AG04450 (cell line): ENCODE measurements at regions of chr17 and their contacts with region 1.

Region 1: GRCh38 chr17:63406689-63407330 is 39.3 kb downstream of the CYB561 start:
- DNase-seq: peak; percentile 84
- H3K4me3 ChIP-seq: no peak overlapping the region
- H3K27ac ChIP-seq: no peak overlapping the region
- H3K27me3 ChIP-seq: no peaks in the 10 kb centered on the region
- CTCF ChIP-seq: peak; percentile 91

Region 2: GRCh38 chr17:62975206-62975605 is 431.6 kb before region 1 on chr17:
- CTCF ChIA-PET with region 1: interaction called, 11 read pairs
- POLR2A ChIA-PET with region 1: no interaction called
- DNase-seq: no peak
- H3K4me3 ChIP-seq: no peak overlapping the region
- H3K27ac ChIP-seq: no peak overlapping the region
- H3K27me3 ChIP-seq: no peaks in the 10 kb centered on the region
- CTCF ChIP-seq: no peak

Region 3: GRCh38 chr17:62995377-62995885 is 411.4 kb before region 1 on chr17:
- CTCF ChIA-PET with region 1: interaction called, 13 read pairs
- POLR2A ChIA-PET with region 1: no interaction called
- DNase-seq: no peak
- H3K4me3 ChIP-seq: no peak overlapping the region
- H3K27ac ChIP-seq: no peak overlapping the region
- H3K27me3 ChIP-seq: no peaks in the 10 kb centered on the region
- CTCF ChIP-seq: peak; percentile 67

Region 4: GRCh38 chr17:63082273-63082993 is 324.4 kb before region 1 on chr17:
- CTCF ChIA-PET with region 1: interaction called, 68 read pairs
- POLR2A ChIA-PET with region 1: interaction called, 3 read pairs
- DNase-seq: peak; percentile 1
- H3K4me3 ChIP-seq: no peak overlapping the region
- H3K27ac ChIP-seq: no peak overlapping the region
- H3K27me3 ChIP-seq: no peaks in the 10 kb centered on the region
- CTCF ChIP-seq: peak; percentile 60

Region 5: DNA sequence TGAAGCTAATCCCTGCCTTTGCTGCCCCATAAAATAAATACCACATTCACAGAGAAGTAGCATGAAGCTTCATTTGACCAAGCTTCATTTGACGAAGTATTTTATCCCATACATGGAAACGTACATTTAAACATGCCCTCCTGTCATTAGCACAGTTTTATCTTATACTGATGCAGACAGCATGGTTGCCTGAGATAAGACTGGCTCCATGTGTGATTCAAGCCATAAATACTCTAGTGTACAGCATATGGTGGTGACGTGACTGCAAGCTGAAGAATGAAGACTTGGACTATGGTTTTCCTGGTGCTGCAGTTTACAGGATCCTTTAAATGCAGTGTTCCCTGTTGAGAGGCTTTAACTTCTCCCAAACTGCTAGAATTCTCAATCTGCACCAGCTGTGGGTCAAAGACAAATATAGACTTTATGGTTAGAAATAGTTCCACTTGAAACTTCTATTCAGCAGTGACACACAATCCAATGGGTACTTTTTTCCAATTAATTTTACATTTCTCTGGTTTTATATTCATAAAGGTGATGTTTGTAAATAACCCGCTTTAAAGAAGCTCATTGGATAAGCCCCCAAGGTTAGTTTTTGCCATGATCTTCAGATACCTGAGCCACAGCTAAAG is 25.6 kb before region 1 on chr17:
- CTCF ChIA-PET with region 1: interaction called, 12 read pairs
- POLR2A ChIA-PET with region 1: no interaction called
- DNase-seq: peak; percentile 42
- H3K4me3 ChIP-seq: no peak overlapping the region
- H3K27ac ChIP-seq: no peak overlapping the region
- H3K27me3 ChIP-seq: no peaks in the 10 kb centered on the region
- CTCF ChIP-seq: no peak

Region 6: DNA sequence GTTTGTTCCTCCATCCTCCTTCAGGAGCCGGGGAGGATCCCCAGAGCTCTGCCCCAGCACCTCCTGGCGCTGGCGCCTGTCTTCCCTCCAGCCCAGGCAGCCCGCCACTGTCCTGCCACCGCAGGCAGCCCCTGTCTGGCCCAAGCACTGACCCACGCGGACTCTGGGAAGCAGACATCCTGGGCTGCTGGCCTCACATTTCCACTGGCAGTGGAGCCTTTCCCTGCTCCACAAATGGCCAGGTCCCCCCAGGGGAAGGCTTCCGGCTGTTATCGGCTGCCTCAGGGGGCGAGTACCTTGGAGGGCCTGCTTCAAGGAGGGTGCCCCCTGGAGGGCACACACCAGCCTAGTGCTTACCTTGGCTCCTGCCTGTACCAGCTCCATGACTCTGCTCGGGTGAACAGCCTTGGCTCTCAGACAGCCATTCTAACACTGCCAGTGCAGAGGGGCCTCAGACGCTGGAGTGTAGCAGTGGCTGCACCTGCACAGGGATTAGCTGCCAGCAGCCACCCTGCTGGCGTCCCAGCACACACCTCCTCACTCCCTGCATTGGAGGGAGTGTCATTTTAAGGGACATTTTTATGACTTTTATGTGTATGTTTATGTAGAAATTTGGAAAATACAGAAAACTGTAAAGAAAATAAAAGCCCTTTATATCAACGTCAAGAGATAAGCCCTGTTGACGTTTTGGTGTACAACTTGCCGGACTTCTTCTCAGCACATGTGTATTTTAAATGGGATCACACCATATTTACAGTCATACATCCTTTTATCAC is 91.1 kb after region 1 on chr17:
- CTCF ChIA-PET with region 1: no interaction called
- POLR2A ChIA-PET with region 1: no interaction called
- DNase-seq: no peak
- H3K4me3 ChIP-seq: no peak overlapping the region
- H3K27ac ChIP-seq: peak overlapping the region; percentile 95
- H3K27me3 ChIP-seq: no peaks in the 10 kb centered on the region
- CTCF ChIP-seq: peak; percentile 30